Activated CD8-positive, alpha-beta memory T cell treated with anti-CD3 and anti-CD28 coated beads, Interleukin-2, amount 10 ng/mL, durations not matched to agents 7 days and 5 days (primary cell): ENCODE measurements at regions of chr5 and their contacts with region 1.

Region 1: GRCh38 chr5:149960272-149961185 is at the start of gene SLC26A2:
- DNase-seq: peak; percentile 98
- ATAC-seq: peak; percentile 99
- H3K4me3 Mint-ChIP-seq: peak within 1 kb of the TSS; percentile 85
- H3K27ac Mint-ChIP-seq: peak within 1 kb of the TSS; percentile 94
- H3K4me1 Mint-ChIP-seq: peaks cover 31% of the 10 kb centered on the region
- H3K27me3 Mint-ChIP-seq: no peaks in the 10 kb centered on the region
- total RNA-seq, gene SLC26A2: 6.2 to 8.4 TPM

Region 2: DNA sequence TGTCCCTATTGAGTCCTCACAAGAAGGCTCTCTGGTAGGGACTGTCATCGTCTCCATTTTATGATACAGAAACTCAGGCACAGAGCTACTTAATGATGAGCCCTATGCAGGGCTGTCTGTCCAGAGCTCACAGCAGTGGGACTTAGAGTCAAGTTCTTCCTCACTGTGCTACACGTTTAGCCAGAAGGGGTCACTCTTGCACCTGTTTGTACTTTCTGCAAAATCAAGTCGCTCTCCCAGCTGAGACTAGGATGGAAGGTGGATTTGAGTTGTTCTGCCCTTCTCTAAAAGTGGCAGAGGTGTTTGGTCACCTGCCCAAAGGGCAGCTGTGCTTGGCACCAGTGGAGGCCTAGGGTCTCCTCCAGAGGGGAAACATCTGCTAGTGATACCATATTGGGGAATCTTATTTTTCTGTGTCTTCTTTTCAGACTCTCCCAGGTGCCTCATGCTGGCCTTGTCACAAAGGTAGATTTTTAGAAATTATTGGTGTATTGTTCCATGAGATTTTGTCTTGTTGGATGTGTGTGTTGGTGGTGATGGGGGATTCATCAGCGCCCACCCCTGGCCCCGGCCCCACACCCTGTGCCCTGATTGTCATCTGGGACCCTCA is 126.2 kb before region 1 on chr5:
- CTCF ChIA-PET with region 1: interaction called, 98 read pairs
- DNase-seq: peak; percentile 71
- ATAC-seq: peak; percentile 50
- H3K4me3 Mint-ChIP-seq: no peak overlapping the region
- H3K27ac Mint-ChIP-seq: no peak overlapping the region
- H3K4me1 Mint-ChIP-seq: peaks cover 6% of the 10 kb centered on the region
- H3K27me3 Mint-ChIP-seq: no peaks in the 10 kb centered on the region

Region 3: DNA sequence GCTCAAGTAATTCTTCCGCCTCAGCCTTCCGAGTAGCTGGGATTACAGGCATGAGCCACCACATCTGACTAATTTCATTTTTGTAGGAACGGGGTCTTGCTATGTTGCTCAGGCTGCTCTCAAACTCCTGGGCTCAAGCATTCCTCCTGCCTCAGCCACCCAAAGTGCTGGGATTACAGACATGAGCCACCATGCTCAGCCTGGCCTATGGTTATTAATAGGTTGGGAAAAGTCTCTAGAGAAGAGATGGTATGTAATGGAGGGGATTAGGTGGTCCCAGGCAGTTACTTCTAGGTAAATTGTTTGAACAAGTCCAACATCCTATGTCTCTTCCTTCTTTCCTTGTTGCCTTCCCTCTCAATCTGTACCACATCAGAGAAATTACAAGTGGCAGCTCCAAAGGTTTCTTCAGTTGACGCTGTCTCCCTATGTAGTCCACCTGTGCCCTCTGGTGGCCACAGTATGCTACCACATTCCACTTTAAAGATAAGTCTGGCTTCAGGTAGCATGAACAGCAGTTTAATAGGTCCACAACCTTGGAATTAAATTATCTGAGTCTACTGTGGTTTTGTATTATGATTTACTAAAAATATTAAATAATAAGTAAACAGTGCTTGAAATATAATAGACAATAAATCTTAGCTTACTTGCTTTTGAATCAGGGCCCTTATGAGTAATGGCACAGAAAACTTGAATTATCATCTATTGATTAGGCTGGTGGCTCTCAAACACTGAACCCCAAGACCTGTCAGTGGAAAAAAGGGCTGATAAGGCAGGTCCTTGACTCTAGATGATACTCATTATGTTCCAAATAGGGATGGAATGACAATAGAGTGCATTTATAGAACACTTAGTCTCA is 30.2 kb after region 1 on chr5:
- CTCF ChIA-PET with region 1: interaction called, 12 read pairs
- DNase-seq: peak; percentile 80
- ATAC-seq: peak; percentile 86
- H3K4me3 Mint-ChIP-seq: no peak overlapping the region
- H3K27ac Mint-ChIP-seq: no peak overlapping the region
- H3K4me1 Mint-ChIP-seq: peaks cover 3% of the 10 kb centered on the region
- H3K27me3 Mint-ChIP-seq: no peaks in the 10 kb centered on the region

Region 4: DNA sequence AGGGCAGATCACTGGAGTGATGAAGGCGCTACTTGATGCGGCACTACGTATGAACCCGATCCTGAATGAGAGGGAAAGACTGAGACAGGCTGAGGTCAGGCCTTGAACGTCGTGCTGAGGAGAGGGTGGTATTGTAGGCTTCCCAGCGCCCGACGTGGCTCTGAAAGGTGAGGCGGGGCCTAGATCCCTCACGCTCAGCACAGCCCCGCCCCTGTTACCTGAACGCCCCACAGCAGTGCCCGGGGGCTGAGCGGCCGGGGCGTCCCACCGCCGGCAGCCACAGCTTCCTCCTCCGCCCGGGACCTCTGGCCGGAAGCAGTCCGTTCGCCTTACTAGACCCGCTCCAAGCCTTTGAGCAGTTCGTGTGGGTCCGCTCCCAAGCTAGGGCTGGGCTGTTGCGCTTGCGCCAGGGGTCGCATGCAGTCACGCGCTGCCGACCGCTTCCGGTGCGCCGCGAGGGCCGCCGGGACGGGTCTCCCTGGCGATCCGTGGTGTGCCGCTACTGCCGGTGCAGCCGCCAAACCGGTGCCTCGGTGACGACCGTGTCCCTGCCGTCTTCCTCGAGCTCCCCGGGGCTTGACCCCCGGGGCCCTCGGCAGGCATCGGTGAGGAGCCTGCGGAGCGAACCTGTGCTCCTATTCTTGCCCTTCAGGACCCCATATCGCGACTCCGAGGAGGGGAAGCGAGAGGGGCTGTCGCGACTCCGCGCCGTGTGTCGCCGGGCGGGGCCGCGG is 39.9 kb after region 1 on chr5 and contains the starts of genes HMGXB3 and TIGD6:
- CTCF ChIA-PET with region 1: interaction called, 16 read pairs
- DNase-seq: peak; percentile 94
- ATAC-seq: peak; percentile 80
- H3K4me3 Mint-ChIP-seq: peak within 1 kb of the TSS; percentile 89
- H3K27ac Mint-ChIP-seq: peak within 1 kb of the TSS; percentile 98
- H3K4me1 Mint-ChIP-seq: peaks cover 43% of the 10 kb centered on the region
- H3K27me3 Mint-ChIP-seq: no peaks in the 10 kb centered on the region
- total RNA-seq, gene HMGXB3: 44.1 to 49.4 TPM
- total RNA-seq, gene TIGD6: 1.7 to 2.9 TPM